ENCODE measurements at regions of chr10 and their contacts with region 1.

Region 1: DNA sequence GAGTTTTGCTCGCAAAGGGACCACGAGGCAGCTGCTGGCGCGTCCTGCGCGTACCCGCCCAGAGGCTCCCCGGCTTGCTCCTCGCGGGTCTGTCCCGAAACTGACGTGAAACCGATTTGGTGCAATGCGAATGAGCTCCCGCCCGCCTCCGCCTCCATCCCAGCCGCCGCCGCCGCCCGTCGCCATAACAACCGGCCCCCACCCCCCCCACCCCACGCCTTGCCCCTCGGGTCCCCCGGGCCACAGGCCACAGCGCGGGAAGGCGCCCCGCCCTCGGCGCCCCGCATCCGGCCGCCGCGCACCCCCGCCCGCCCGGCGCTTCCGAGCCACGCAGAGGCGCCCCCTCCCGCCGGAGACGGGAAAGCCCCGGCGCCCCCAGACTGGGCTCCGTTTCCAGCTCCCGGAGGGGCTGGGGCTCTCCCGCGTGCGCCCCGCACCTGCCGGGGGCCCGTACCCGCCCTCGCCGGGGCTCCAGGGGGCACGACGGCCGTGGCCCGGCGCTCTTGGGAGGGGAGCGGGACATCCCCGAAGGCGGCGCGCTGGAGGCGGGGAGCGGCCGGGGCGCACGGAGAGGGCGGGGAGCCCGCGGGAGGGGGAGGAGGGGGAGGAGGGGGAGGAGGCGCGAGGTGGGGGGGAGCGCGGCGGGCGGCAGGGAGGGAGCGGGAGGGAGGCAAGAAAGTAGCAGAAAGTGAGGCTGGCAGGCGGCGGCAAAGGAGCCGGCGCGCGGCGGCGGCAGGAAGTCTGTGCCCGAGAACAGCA is at the start of gene CAMK1D:
- DNase-seq: peak; percentile 81 to 96 (median 91)
- ATAC-seq: peak; percentile 65
- H3K4me3 ChIP-seq: peak within 1 kb of the TSS; percentile 67 to 84
- H3K4me3 Mint-ChIP-seq: peak within 1 kb of the TSS; percentile 98
- H3K27ac ChIP-seq: peak within 1 kb of the TSS; percentile 59 to 77
- H3K27ac Mint-ChIP-seq: peak within 1 kb of the TSS; percentile 98
- H3K4me1 ChIP-seq: peaks cover 23% of the 10 kb centered on the region
- H3K4me1 Mint-ChIP-seq: peaks cover 40% of the 10 kb centered on the region
- H3K27me3 ChIP-seq: no peaks in the 10 kb centered on the region
- H3K27me3 Mint-ChIP-seq: no peaks in the 10 kb centered on the region
- CTCF ChIP-seq: no peak
- total RNA-seq, gene CAMK1D: 24.6 to 25.7 TPM

Region 2: DNA sequence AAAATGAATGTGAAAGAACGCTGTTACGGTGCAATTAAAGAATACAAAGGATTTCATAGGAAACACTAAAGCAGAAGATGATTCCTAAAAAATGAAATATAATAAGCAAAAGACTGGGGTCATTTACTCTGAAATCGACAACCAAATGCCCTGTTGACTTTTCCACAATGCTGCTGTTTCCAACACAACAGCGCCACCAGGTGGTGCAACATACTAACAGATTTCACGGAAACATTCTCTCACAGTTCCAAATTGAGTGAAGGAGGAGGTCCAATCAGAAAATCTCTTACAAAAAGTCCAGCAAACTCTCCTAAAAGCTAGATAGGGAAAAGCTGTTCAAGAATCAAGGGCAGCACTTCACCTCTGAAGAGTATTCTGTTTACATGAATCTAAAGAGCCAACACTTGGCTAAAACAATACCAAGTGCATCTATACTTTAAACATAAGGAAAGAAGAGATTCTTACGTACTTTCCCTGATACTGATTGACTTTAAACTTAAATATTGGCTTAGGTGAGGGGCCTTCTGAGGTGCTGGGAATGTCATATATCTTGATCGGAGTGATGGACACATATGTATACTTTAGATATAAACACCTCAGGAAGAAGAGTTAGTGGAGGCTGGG is 362.3 kb before region 1 on chr10:
- CTCF ChIA-PET with region 1: no interaction called
- POLR2A ChIA-PET with region 1: no interaction called
- intact Hi-C with region 1: no loop called
- DNase-seq: peak; percentile 45 to 79 (median 68)
- ATAC-seq: peak; percentile 58
- H3K4me3 ChIP-seq: no peak overlapping the region
- H3K4me3 Mint-ChIP-seq: no peak overlapping the region
- H3K27ac ChIP-seq: no peak overlapping the region
- H3K27ac Mint-ChIP-seq: no peak overlapping the region
- H3K4me1 ChIP-seq: no peaks in the 10 kb centered on the region
- H3K4me1 Mint-ChIP-seq: peaks cover 6% of the 10 kb centered on the region
- H3K27me3 ChIP-seq: no peaks in the 10 kb centered on the region
- H3K27me3 Mint-ChIP-seq: no peaks in the 10 kb centered on the region
- CTCF ChIP-seq: peak; percentile 97

Region 3: DNA sequence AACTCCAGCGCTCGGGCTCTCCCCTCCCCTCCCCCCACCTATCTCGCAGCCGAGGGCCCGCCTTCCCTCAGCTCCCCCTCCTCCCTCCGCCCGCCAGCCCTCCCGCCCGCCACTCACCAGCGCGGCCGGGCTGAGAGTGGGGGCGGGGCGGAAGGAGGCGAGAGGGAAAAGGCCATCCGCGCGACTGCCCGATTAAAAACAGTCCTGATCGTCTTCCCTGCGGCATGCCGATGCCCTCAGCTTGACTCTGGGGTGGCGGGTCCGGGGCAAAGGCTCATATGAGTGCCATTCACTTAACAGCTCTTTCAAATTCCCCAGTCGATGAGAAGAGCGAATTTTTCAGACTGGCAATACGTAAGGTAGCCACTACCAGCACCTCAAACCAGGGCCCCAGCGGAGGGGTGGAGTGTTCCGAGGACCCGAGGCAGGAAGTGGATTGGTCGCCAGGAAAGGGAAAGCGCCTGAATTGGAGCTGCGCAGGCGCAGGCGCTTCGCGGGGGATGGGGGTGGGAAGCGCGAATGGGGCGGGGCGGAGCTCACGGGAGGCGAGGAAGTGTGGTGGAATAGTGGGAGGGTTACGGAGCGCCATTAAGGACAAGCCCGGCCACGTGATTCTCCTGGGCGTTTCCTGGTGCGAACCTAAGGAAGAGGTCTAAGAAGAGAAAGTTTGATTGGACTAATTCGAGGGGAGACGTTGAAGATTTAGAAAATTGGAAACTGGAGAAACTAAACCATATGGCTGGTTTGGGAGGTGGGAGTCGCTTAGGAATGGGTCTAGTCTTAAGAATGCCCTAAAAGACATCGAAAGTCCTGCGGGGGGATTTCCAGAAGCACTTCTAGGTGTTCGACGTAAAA is 306.0 kb before region 1 on chr10 and contains the start of gene UPF2:
- CTCF ChIA-PET with region 1: no interaction called
- POLR2A ChIA-PET with region 1: no interaction called
- intact Hi-C with region 1: loop called (anchors 2 to 10 kb)
- DNase-seq: peak; percentile 93 to 98 (median 95)
- ATAC-seq: peak; percentile 86
- H3K4me3 ChIP-seq: peak within 1 kb of the TSS; percentile 93 to 96
- H3K4me3 Mint-ChIP-seq: peak within 1 kb of the TSS; percentile 94
- H3K27ac ChIP-seq: peak within 1 kb of the TSS; percentile 98 to 99
- H3K27ac Mint-ChIP-seq: peak within 1 kb of the TSS; percentile 100
- H3K4me1 ChIP-seq: peaks cover 14% of the 10 kb centered on the region
- H3K4me1 Mint-ChIP-seq: peaks cover 40% of the 10 kb centered on the region
- H3K27me3 ChIP-seq: peaks cover 0 to 2% of the 10 kb centered on the region in 2 experiments
- H3K27me3 Mint-ChIP-seq: no peaks in the 10 kb centered on the region
- CTCF ChIP-seq: no peak
- total RNA-seq, gene UPF2: 12.7 to 14.3 TPM

Region 4: GRCh38 chr10:12195603-12196506 is 153.2 kb before region 1 on chr10 and contains the starts of genes CDC123 and NUDT5:
- CTCF ChIA-PET with region 1: no interaction called
- POLR2A ChIA-PET with region 1: interaction called, 6 read pairs
- intact Hi-C with region 1: loop called (anchors 5 to 10 kb)
- DNase-seq: peak; percentile 62 to 92 (median 84)
- ATAC-seq: peak; percentile 92
- H3K4me3 ChIP-seq: peak within 1 kb of the TSS; percentile 77 to 82
- H3K4me3 Mint-ChIP-seq: peak within 1 kb of the TSS; percentile 98
- H3K27ac ChIP-seq: peak within 1 kb of the TSS; percentile 82 to 98
- H3K27ac Mint-ChIP-seq: peak within 1 kb of the TSS; percentile 99
- H3K4me1 ChIP-seq: peaks cover 24% of the 10 kb centered on the region
- H3K4me1 Mint-ChIP-seq: peaks cover 62% of the 10 kb centered on the region
- H3K27me3 ChIP-seq: no peaks in the 10 kb centered on the region
- H3K27me3 Mint-ChIP-seq: no peaks in the 10 kb centered on the region
- CTCF ChIP-seq: no peak
- total RNA-seq, gene CDC123: 45.3 to 55.0 TPM
- total RNA-seq, gene NUDT5: 12.1 to 13.6 TPM

Region 5: DNA sequence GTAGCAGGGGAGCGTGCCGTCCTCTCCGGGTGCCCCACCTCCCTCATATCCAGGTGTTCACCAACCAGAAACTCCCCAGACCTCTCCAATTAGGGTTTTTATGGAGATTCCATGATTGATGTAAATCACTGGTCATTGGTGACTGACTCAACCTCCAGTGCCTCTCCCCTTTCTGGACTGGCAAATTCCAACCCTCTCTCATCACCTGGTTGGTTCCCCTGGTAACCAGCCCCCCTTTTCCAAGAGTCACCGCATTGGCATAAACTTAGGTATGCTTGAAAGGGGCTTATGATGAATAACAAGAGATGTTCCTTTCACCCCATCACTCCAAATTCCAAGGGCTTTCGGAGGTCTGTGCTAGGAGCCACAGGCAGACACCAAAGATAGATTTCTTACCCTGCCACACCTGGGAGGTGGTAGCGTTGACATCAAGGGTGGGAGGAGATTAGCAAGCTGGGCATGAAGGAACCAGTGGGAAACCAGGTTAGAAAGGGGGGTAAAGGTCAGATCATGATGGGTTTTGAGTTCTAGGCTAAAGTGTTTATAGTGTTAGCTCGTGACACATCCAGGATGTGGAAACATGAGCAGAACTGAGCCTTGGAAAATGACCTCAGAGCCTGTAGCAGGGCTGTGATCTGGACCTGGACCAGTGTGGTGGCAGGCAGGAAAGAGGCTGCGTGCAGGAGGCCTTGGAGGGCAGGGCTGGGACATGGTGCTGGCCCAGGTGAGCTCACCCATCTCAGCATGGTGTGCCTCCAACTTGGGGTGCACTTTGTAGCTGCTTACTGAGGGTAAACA is 45.4 kb after region 1 on chr10:
- CTCF ChIA-PET with region 1: no interaction called
- POLR2A ChIA-PET with region 1: interaction called, 3 read pairs
- intact Hi-C with region 1: loop called in 1 of 2 experiments (anchors 5 kb)
- DNase-seq: no peak
- ATAC-seq: no peak
- H3K4me3 ChIP-seq: no peak overlapping the region
- H3K4me3 Mint-ChIP-seq: no peak overlapping the region
- H3K27ac ChIP-seq: no peak overlapping the region
- H3K27ac Mint-ChIP-seq: no peak overlapping the region
- H3K4me1 ChIP-seq: no peaks in the 10 kb centered on the region
- H3K4me1 Mint-ChIP-seq: peaks cover 27% of the 10 kb centered on the region
- H3K27me3 ChIP-seq: no peaks in the 10 kb centered on the region
- H3K27me3 Mint-ChIP-seq: no peaks in the 10 kb centered on the region
- CTCF ChIP-seq: no peak

Region 6: GRCh38 chr10:12656518-12657142 is 307.6 kb after region 1 on chr10:
- CTCF ChIA-PET with region 1: interaction called, 8 read pairs
- POLR2A ChIA-PET with region 1: interaction called, 9 read pairs
- intact Hi-C with region 1: loop called in 1 of 2 experiments (anchors 1 kb)
- DNase-seq: peak in 2 of 9 experiments; percentile 59 to 71
- ATAC-seq: peak; percentile 81
- H3K4me3 ChIP-seq: no peak overlapping the region
- H3K4me3 Mint-ChIP-seq: peak overlapping the region; percentile 29
- H3K27ac ChIP-seq: no peak overlapping the region
- H3K27ac Mint-ChIP-seq: no peak overlapping the region
- H3K4me1 ChIP-seq: no peaks in the 10 kb centered on the region
- H3K4me1 Mint-ChIP-seq: peaks cover 8% of the 10 kb centered on the region
- H3K27me3 ChIP-seq: no peaks in the 10 kb centered on the region
- H3K27me3 Mint-ChIP-seq: no peaks in the 10 kb centered on the region
- CTCF ChIP-seq: peak; percentile 72

Region 7: DNA sequence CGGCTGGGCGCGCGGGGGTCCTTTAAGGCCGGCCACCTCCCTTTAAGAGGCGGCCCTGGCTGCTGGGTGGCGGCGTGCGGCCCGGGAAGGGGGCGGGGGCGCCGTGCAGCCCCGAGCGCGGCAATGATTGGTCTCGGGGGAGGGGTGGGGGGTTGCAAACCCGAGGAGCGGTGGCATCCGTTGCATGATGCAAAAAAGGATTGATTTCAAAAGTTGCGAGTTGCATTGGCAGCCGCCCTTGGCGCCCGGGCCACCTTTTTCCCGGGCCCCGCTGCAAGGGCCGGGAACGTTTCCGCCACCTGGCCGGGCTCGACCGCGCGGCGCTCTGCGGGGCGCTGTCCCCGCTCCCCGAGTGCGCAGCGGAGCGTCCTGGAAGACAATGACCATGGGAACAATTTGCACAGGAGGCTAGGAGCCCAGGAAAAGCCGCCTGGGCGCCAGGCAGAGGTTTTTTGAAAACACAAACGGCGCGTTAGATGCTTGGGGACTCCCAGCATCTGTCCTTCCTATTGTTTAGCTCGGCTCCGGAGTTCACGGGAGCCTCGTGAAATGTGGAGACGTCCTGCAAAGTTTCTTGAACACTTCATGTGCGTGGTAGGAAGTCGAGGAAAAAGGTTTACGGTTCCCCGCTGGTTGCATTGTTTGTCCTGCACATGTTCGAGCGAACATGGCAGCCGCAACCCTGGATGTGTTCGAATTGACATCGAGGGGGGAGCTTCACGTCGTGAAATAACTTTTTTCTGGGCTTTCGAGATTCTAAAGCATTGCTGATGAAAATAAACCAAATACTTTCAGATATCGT is 999.4 kb after region 1 on chr10 and contains the start of gene SEPHS1:
- CTCF ChIA-PET with region 1: no interaction called
- POLR2A ChIA-PET with region 1: no interaction called
- intact Hi-C with region 1: loop called in 1 of 2 experiments (anchors 5 kb)
- DNase-seq: peak; percentile 51 to 89 (median 79)
- ATAC-seq: peak; percentile 67
- H3K4me3 ChIP-seq: peak within 1 kb of the TSS; percentile 83 to 93
- H3K4me3 Mint-ChIP-seq: peak within 1 kb of the TSS; percentile 96
- H3K27ac ChIP-seq: peak within 1 kb of the TSS; percentile 65 to 82
- H3K27ac Mint-ChIP-seq: peak within 1 kb of the TSS; percentile 94
- H3K4me1 ChIP-seq: peaks cover 48% of the 10 kb centered on the region
- H3K4me1 Mint-ChIP-seq: peaks cover 61% of the 10 kb centered on the region
- H3K27me3 ChIP-seq: no peaks in the 10 kb centered on the region
- H3K27me3 Mint-ChIP-seq: no peaks in the 10 kb centered on the region
- CTCF ChIP-seq: no peak
- total RNA-seq, gene SEPHS1: 16.9 to 19.2 TPM

Measured in CD8-positive, alpha-beta T cell (primary cell).